ENCODE measurements at regions of chr3 and their contacts with region 1.

Region 1: GRCh38 chr3:16550676-16551341 is 37.3 kb upstream of the RFTN1 start:
- DNase-seq: peak in 1 of 3 donors; percentile 89
- ATAC-seq: peak; percentile 94
- H3K4me3 ChIP-seq: no peak overlapping the region
- H3K4me1 ChIP-seq: no peaks in the 10 kb centered on the region
- CTCF ChIP-seq: peak; percentile 63

Region 2: GRCh38 chr3:14565868-14566588 is 1984.8 kb before region 1 on chr3:
- intact Hi-C with region 1: no loop called
- DNase-seq: no peak
- ATAC-seq: no peak
- H3K4me3 ChIP-seq: no peak overlapping the region
- H3K4me1 ChIP-seq: peaks cover 2% of the 10 kb centered on the region
- CTCF ChIP-seq: no peak

Region 3: GRCh38 chr3:16290007-16290826 is 260.6 kb before region 1 on chr3:
- intact Hi-C with region 1: loop called (anchors 5 to 10 kb)
- DNase-seq: peak in 1 of 3 donors; percentile 75
- ATAC-seq: peak; percentile 51
- H3K4me3 ChIP-seq: no peak overlapping the region
- H3K4me1 ChIP-seq: no peaks in the 10 kb centered on the region
- CTCF ChIP-seq: peak; percentile 26

Region 4: GRCh38 chr3:16357186-16358147 is 193.3 kb before region 1 on chr3:
- intact Hi-C with region 1: no loop called
- DNase-seq: no peak
- ATAC-seq: no peak
- H3K4me3 ChIP-seq: no peak overlapping the region
- H3K4me1 ChIP-seq: no peaks in the 10 kb centered on the region
- CTCF ChIP-seq: no peak

Measured in mucosa of descending colon (tissue), 3 donors.